Head of caudate nucleus (tissue), 42 donors: ENCODE measurements at regions of chr17 and their contacts with region 1.

Region 1: DNA sequence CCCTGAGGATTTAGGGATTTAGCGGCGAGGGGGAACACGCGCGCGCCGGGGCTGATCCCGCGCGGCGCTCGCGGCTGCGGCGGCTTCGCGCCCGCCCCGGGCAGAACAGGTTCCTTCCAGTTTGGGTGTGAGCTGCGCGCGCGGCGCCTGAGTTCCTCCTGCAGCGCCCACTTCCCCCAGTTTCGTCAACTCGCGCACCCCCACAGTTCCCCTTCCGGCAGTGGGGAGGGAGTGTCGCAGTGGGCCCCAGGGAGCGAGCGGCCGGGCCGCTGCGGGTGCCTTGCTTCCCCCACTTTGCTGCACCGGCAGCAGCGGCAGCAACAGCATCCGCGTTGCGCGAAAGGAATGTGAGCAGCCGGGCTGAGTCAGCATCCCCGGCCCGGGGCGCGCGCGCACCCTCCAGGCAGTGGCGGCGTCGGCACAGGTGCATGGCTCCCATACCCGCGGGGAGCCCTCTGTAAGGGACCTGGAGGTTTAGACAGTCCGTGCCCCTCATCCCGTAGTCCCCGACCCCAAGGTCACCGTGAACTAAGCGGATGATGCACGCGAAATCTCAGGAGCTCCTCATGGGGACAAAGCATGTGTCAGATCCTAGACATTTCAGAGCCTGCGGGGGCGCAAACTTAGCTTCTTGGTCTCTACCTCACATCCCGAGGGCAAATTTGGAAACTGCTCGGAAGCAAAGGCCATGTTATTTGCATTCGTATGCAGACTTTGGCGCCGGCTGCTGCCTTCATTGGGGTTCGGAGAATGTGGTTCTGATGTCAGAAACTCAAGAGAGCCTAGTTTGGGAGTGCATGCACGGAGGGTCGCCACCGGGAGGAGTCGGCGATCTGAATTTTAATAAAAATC is 775 bp downstream of the ARSG start:
- DNase-seq: peak; percentile 53 to 93 (median 81)

Region 2: GRCh38 chr17:68133346-68134045 is 158.6 kb before region 1 on chr17:
- intact Hi-C with region 1: no loop called
- DNase-seq: no peak

Region 3: GRCh38 chr17:68435876-68436842 is 144.1 kb after region 1 on chr17:
- intact Hi-C with region 1: loop called (anchors 10 kb)
- DNase-seq: peak; percentile 46 to 90 (median 80)